Sciatic nerve (tissue), 2 donors: ENCODE measurements at regions of chr2 and their contacts with region 1.

Region 1: DNA sequence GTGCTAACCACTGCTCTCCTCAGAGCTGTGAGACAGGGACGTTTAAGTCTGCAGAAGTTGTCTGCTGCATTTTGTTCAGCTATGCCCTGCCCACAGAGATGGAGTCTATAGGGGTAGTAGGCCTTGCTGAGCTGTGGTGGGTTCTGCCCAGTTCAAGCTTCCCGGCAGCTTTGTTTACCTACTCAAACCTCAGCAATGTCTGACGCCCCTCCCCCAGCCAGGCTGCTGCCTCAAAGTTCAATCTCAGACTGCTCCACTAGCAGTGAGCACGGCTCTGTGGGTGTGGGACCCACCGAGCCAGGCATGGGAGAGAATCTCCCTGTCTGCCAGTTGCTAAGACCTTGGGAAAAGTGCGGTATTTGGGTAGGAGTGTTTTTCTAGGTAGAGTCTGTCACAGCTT is 387.8 kb upstream of the SLC39A10 start:
- DNase-seq: no peak
- ATAC-seq: no peak

Region 2: DNA sequence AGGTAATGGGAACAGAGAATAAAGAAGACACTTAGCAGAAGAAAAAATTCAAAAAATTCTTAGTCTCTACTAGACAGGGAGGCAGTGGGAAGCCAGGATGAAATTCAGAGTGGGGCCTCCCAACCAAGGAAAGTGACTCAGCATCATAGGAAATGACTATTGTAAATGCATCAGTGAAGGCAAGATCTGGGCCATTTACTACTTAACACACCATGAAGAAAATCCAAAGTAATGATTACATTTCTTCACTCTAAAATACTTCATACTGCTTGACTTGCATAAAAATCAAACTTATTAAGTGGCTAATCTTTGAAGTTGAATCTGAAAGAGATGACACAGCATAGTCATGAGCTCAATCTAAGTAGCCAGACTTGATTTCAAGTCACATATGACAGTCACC is 18.0 kb before region 1 on chr2:
- intact Hi-C with region 1: loop called (anchors 2 kb)
- DNase-seq: no peak
- ATAC-seq: no peak